Activated CD4-positive, alpha-beta memory T cell treated with anti-CD3 and anti-CD28 coated beads for 36 hours (primary cell): ENCODE measurements at regions of chr11 and their contacts with region 1.

Region 1: GRCh38 chr11:96188243-96189006 is 154.6 kb downstream of the MAML2 start:
- DNase-seq: peak; percentile 59
- H3K4me3 Mint-ChIP-seq: peak overlapping the region; percentile 7
- H3K27ac Mint-ChIP-seq: peak overlapping the region; percentile 79
- H3K4me1 Mint-ChIP-seq: peaks cover 74% of the 10 kb centered on the region
- H3K27me3 Mint-ChIP-seq: no peaks in the 10 kb centered on the region

Region 2: GRCh38 chr11:96134602-96135001 is 53.8 kb before region 1 on chr11:
- CTCF ChIA-PET with region 1: no interaction called
- POLR2A ChIA-PET with region 1: no interaction called
- intact Hi-C with region 1: no loop called
- DNase-seq: no peak
- H3K4me3 Mint-ChIP-seq: no peak overlapping the region
- H3K27ac Mint-ChIP-seq: no peak overlapping the region
- H3K4me1 Mint-ChIP-seq: peaks cover 66% of the 10 kb centered on the region
- H3K27me3 Mint-ChIP-seq: no peaks in the 10 kb centered on the region

Region 3: GRCh38 chr11:96155627-96156378 is 32.6 kb before region 1 on chr11:
- CTCF ChIA-PET with region 1: interaction called, 4 read pairs
- POLR2A ChIA-PET with region 1: interaction called, 7 read pairs
- intact Hi-C with region 1: loop called (anchors 1 kb)
- DNase-seq: peak; percentile 88
- H3K4me3 Mint-ChIP-seq: peak overlapping the region; percentile 42
- H3K27ac Mint-ChIP-seq: peak overlapping the region; percentile 95
- H3K4me1 Mint-ChIP-seq: peaks cover 61% of the 10 kb centered on the region
- H3K27me3 Mint-ChIP-seq: no peaks in the 10 kb centered on the region

Region 4: GRCh38 chr11:96228910-96229309 is 40.5 kb after region 1 on chr11:
- CTCF ChIA-PET with region 1: no interaction called
- POLR2A ChIA-PET with region 1: interaction called, 3 read pairs
- intact Hi-C with region 1: loop called (anchors 1 kb)
- DNase-seq: no peak
- H3K4me3 Mint-ChIP-seq: no peak overlapping the region
- H3K27ac Mint-ChIP-seq: peak overlapping the region; percentile 83
- H3K4me1 Mint-ChIP-seq: peaks cover 81% of the 10 kb centered on the region
- H3K27me3 Mint-ChIP-seq: no peaks in the 10 kb centered on the region